Posterior vena cava (tissue), 2 donors: ENCODE measurements at regions of chr3 and their contacts with region 1.

Region 1: GRCh38 chr3:25412269-25412668 is 15.8 kb upstream of the RARB start:
- DNase-seq: no peak

Region 2: GRCh38 chr3:24562895-24563294 is 849.4 kb before region 1 on chr3:
- intact Hi-C with region 1: no loop called
- DNase-seq: no peak

Region 3: GRCh38 chr3:25293731-25294130 is 118.5 kb before region 1 on chr3:
- intact Hi-C with region 1: no loop called
- DNase-seq: no peak

Region 4: DNA sequence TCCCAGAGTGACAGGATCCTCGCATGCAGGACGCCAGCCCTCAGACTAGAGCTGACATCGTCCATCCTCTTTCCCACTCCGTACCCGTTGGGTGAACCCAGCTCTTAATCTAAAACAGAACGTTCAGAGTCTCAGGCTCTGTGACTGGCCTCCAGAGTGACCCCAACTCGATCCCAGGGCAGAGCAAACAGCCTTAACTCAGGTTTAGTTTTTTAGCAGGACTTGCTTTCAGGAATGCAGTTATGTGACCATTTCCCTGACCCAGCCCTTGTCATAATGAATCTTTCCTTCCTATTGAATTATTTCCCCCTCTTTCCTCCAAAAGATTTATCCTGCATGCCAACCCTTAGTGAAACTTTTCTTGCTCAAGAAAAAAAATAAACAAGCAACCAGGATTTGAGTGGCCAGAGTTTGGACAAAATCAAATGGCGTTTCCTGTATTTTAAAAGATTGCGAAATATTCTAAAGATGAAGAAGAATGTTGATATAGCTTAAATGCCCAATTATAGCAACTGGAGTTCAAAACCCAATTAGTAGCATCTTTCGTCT is 32.0 kb before region 1 on chr3:
- intact Hi-C with region 1: loop called in 1 of 2 experiments (anchors 1 kb)
- DNase-seq: no peak